IMR-90 (cell line): ENCODE measurements at regions of chr4 and their contacts with region 1.

Region 1: DNA sequence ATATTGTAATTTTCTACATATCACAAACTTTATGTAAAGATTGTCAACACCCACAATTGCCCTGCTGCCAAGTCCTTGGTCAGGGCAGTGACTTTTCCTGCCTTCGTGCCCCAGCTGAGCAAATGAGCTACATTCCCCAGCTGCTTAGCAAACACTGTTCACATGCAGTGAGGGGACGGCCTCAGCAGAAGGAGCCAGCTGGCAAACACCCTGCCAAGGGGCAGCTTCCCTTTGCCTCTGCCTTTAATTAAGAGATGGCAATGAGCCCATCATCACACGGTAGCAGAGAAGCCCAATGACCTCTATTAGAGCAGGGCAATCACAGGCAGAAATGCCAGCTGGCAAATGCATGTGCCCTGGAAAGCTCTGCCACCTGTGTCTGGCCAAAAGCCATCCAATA is 253.4 kb downstream of the EPHA5 start:
- DNase-seq: no peak
- ATAC-seq: no peak
- H3K4me3 ChIP-seq: no peak overlapping the region
- H3K27ac ChIP-seq: no peak overlapping the region
- H3K4me1 ChIP-seq: no peaks in the 10 kb centered on the region
- H3K27me3 ChIP-seq: no peaks in the 10 kb centered on the region
- CTCF ChIP-seq: no peak
- POLR2A ChIP-seq: no peak
- RAD21 ChIP-seq: no peak

Region 2: DNA sequence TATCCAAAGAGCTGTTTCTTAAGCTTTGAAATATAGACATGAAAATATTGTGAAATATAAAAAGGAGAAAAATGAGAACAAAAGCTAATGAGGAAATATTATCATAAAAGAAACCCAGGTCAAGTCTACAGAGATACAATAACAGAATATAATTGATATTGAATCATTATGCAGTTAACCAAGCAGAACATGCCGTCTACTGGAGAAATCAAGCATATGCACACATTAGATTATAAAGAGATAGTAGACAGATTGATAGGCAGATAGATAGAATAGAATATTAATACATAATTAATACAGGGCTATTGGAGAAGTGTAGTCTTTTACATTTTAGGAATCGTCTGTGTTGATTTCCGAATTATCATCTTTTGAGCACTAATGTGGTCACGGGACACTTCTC is 44.9 kb after region 1 on chr4:
- CTCF ChIA-PET with region 1: no interaction called
- POLR2A ChIA-PET with region 1: no interaction called
- dilution Hi-C with region 1: no loop called
- in situ Hi-C with region 1: no loop called
- intact Hi-C with region 1: loop called (anchors 1 kb)
- DNase-seq: no peak
- ATAC-seq: no peak
- H3K4me3 ChIP-seq: no peak overlapping the region
- H3K27ac ChIP-seq: no peak overlapping the region
- H3K4me1 ChIP-seq: no peaks in the 10 kb centered on the region
- H3K27me3 ChIP-seq: no peaks in the 10 kb centered on the region
- CTCF ChIP-seq: no peak
- POLR2A ChIP-seq: no peak
- RAD21 ChIP-seq: no peak